K562 (cell line): ENCODE measurements at regions of chr5 and their contacts with region 1.

Region 1: GRCh38 chr5:181243512-181244343 is at the start of gene RACK1:
- DNase-seq: peak; percentile 65 to 94 (median 78)
- ATAC-seq: peak; percentile 67
- H3K4me3 ChIP-seq: peak within 1 kb of the TSS; percentile 94
- H3K27ac ChIP-seq: peak within 1 kb of the TSS; percentile 99
- H3K4me1 ChIP-seq: peaks cover 31 to 47% of the 10 kb centered on the region in 2 experiments; a peak in 4 of 5 replicates
- H3K27me3 ChIP-seq: no peaks in the 10 kb centered on the region
- CTCF ChIP-seq: no peak
- EP300 ChIP-seq: peak; percentile 27; the same call in 1 of the 2 replicates
- POLR2A ChIP-seq: peak; percentile 99
- RAD21 ChIP-seq: no peak
- polyA plus RNA-seq, gene RACK1: 3,894 to 5,311 TPM

Region 2: DNA sequence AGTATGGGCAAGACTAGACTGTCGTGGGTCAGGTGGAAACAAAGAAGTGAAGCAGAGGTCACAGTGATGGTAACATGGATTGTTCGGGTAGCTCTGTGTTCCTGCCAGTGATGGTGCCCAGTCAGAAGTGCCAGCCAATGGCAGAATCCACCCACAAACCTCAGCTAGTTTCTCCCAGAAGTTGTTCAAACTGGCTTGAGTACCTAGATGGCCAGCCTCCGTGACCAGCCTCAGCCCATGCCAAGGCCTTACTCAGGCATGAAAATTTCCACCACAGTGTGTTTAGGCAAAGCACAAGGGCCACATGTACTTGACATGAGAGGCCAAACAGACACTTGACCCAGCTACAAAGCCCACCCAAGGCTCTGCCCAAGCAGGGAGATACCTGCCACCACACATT is 223.0 kb before region 1 on chr5:
- CTCF ChIA-PET with region 1: no interaction called
- POLR2A ChIA-PET with region 1: no interaction called
- in situ Hi-C with region 1: no loop called
- intact Hi-C with region 1: no loop called
- DNase-seq: peak in 1 of 4 experiments; percentile 2
- ATAC-seq: no peak
- H3K4me3 ChIP-seq: no peak overlapping the region
- H3K27ac ChIP-seq: no peak overlapping the region
- H3K4me1 ChIP-seq: peaks cover 6% of the 10 kb centered on the region in 2 experiments; a peak in 4 of 5 replicates
- H3K27me3 ChIP-seq: no peaks in the 10 kb centered on the region
- CTCF ChIP-seq: no peak
- EP300 ChIP-seq: no peak
- POLR2A ChIP-seq: no peak
- RAD21 ChIP-seq: no peak

Region 3: GRCh38 chr5:181069767-181070491 is 173.8 kb before region 1 on chr5:
- CTCF ChIA-PET with region 1: no interaction called
- POLR2A ChIA-PET with region 1: no interaction called
- in situ Hi-C with region 1: no loop called
- intact Hi-C with region 1: no loop called
- DNase-seq: peak in 3 of 4 experiments; percentile 24 to 58 (median 54)
- ATAC-seq: peak; percentile 90
- H3K4me3 ChIP-seq: no peak overlapping the region
- H3K27ac ChIP-seq: no peak overlapping the region
- H3K4me1 ChIP-seq: peaks cover 0 to 11% of the 10 kb centered on the region in 2 experiments; a peak in 2 of 5 replicates
- H3K27me3 ChIP-seq: no peaks in the 10 kb centered on the region
- CTCF ChIP-seq: no peak
- EP300 ChIP-seq: no peak
- POLR2A ChIP-seq: peak; percentile 56; the same call in 1 of the 2 replicates
- RAD21 ChIP-seq: no peak

Region 4: DNA sequence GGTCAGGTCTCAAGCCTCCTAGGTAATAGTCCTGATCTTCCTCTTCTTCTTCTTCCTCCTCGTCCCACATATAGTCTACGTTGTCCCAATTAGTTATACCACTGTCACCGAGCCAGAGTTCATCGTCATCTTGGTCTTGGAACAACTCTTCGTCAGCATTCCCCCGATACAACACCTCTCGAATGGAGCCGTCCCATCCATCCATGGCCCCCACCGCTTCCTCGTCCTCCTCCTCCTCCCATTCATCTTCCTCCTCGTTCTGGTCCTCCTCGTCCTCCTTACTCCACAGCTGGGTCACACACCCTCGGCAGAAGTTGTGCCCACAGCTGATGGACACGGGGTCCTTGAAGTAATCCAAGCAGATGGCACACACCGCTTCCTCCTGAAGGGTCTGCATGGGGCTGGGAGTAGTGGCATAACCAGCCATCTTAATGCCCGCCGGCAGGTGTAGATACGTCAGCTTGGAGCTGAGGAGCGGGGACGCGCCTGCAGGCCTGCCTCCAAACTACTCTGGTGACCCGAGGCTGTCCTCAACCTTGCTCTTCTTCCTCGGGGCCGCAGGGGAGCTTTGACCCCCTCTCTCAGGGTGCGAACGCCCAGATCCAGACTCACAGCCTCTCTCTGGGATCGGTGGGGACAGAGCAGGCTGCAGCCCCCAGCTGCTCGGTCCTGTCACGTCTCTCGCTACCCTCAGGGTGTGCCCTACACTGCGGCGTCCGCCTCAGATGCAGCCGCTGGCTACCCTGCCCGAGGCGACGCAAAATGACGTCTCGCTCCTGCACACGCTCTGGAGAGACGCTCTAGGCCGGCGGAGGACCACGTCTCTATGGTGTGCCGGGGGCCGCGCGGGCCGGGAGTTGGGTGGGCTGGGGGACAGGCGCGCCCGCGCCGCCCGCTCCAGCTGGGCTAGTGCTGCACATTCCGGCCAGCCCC is 16.9 kb after region 1 on chr5 and contains the start of gene TRIM52:
- CTCF ChIA-PET with region 1: no interaction called
- POLR2A ChIA-PET with region 1: interaction called, 185 read pairs
- in situ Hi-C with region 1: no loop called
- intact Hi-C with region 1: no loop called
- DNase-seq: peak; percentile 77 to 94 (median 82)
- ATAC-seq: peak; percentile 88
- H3K4me3 ChIP-seq: peak within 1 kb of the TSS; percentile 98
- H3K27ac ChIP-seq: peak within 1 kb of the TSS; percentile 99
- H3K4me1 ChIP-seq: peaks cover 21 to 29% of the 10 kb centered on the region in 2 experiments; a peak in 4 of 5 replicates
- H3K27me3 ChIP-seq: no peaks in the 10 kb centered on the region
- CTCF ChIP-seq: no peak
- EP300 ChIP-seq: 0 out of 2 replicates have a peak, but pooled peaks have one; percentile 16
- POLR2A ChIP-seq: peak; percentile 76
- RAD21 ChIP-seq: peak in 1 of 2 experiments; percentile 23; a peak in 1 of 4 replicates
- polyA plus RNA-seq, gene TRIM52: 3.3 to 3.7 TPM

Region 5: DNA sequence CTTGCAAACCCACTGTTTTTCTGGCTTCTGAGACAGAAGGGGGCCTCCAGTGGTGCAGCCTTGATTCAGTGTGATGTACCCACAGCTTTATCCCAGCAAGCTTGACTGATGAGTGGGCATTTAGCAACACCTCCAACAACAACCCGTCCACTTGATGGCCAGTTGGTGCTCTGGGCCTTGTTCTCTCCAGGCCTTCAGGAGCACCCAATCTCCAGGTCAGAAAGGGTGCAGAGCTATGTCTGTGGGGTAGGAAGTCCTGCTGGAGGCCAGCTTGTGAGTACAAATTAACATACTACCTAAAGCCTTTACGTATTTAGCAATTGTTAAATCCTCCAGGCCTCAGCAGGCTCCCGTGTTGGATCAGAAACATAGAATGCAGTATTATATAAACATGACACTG is 27.4 kb after region 1 on chr5:
- CTCF ChIA-PET with region 1: no interaction called
- POLR2A ChIA-PET with region 1: no interaction called
- in situ Hi-C with region 1: no loop called
- intact Hi-C with region 1: no loop called
- DNase-seq: no peak
- ATAC-seq: no peak
- H3K4me3 ChIP-seq: no peak overlapping the region
- H3K27ac ChIP-seq: no peak overlapping the region
- H3K4me1 ChIP-seq: peaks cover 13 to 14% of the 10 kb centered on the region in 2 experiments; a peak in 4 of 5 replicates
- H3K27me3 ChIP-seq: no peaks in the 10 kb centered on the region
- CTCF ChIP-seq: no peak
- EP300 ChIP-seq: no peak
- POLR2A ChIP-seq: no peak
- RAD21 ChIP-seq: no peak

Region 6: GRCh38 chr5:181281077-181281983 is 37.6 kb after region 1 on chr5:
- CTCF ChIA-PET with region 1: no interaction called
- POLR2A ChIA-PET with region 1: interaction called, 10 read pairs
- in situ Hi-C with region 1: no loop called
- intact Hi-C with region 1: no loop called
- DNase-seq: peak; percentile 82 to 96 (median 85)
- ATAC-seq: peak; percentile 99
- H3K4me3 ChIP-seq: peak overlapping the region; percentile 86
- H3K27ac ChIP-seq: peak overlapping the region; percentile 98
- H3K4me1 ChIP-seq: peaks cover 0 to 24% of the 10 kb centered on the region in 2 experiments; a peak in 3 of 5 replicates
- H3K27me3 ChIP-seq: no peaks in the 10 kb centered on the region
- CTCF ChIP-seq: no peak
- EP300 ChIP-seq: no peak
- POLR2A ChIP-seq: peak; percentile 98
- RAD21 ChIP-seq: no peak